H1 (cell line): ENCODE measurements at regions of chr10 and their contacts with region 1.

Region 1: GRCh38 chr10:117174439-117175214 is 22.7 kb upstream of the KCNK18 start:
- DNase-seq: peak; percentile 67 to 96
- H3K4me3 ChIP-seq: peak overlapping the region; percentile 29 to 67 (median 60); a peak in 7 of 8 replicates
- H3K27ac ChIP-seq: no peak overlapping the region
- H3K4me1 ChIP-seq: peaks cover 0 to 15% (median 7%) of the 10 kb centered on the region in 4 experiments; a peak in 6 of 7 replicates
- H3K27me3 ChIP-seq: peaks cover 32 to 56% (median 49%) of the 10 kb centered on the region in 4 experiments
- CTCF ChIP-seq: peak; percentile 70 to 96 (median 96)
- EP300 ChIP-seq: no peak
- POLR2A ChIP-seq: no peak
- RAD21 ChIP-seq: peak; percentile 93 to 94

Region 2: DNA sequence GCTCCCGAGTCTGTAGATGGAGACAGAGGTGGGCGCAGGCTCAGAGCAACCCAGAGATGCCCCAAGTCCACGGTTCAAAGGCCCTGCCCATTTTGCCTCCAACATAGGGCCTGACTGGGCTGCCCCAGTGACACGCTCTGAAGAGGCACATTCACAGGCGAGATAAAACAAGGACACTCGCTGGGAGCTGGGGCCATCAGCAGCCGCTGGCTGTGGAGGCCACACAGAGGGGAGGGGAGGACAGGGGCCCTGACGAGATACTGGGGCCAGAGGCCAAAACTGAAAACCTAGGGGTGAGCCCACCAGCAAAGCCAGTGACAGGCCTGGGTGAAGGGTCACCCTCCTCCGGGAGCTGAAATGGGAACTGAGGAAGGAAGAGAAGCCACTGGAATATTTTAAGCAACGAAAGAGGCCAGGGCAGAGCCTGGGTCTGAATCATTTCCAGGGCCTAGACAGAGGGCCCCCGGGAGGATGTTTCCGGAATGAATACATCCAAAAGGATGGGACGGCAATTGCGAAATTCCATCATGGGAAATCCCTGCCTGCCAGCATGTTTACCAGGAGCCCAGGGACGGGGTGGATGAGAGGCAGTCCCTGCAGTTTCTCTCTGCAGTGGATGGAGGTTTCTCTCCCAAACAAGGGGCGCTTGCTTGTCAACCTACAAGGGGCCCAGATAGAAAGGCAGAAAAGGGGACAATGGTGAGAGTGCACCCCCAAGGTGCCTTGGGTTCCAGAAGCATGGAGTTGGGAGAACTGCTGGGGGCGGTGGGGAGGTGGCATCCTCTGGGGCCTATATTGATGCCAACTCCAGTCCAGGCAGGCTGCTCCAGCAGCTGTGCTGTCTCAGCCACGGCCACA is 403.3 kb before region 1 on chr10:
- CTCF ChIA-PET with region 1: interaction called, 12 read pairs
- POLR2A ChIA-PET with region 1: no interaction called
- DNase-seq: no peak
- H3K4me3 ChIP-seq: no peak overlapping the region
- H3K27ac ChIP-seq: no peak overlapping the region
- H3K4me1 ChIP-seq: peaks cover 0 to 7% (median 0%) of the 10 kb centered on the region in 4 experiments; a peak in 2 of 7 replicates
- H3K27me3 ChIP-seq: no peaks in the 10 kb centered on the region; a peak in 1 of 7 replicates
- CTCF ChIP-seq: no peak
- EP300 ChIP-seq: no peak
- POLR2A ChIP-seq: no peak
- RAD21 ChIP-seq: no peak

Region 3: GRCh38 chr10:117094856-117095255 is 79.8 kb before region 1 on chr10:
- CTCF ChIA-PET with region 1: interaction called, 10 read pairs
- POLR2A ChIA-PET with region 1: no interaction called
- DNase-seq: no peak
- H3K4me3 ChIP-seq: no peak overlapping the region
- H3K27ac ChIP-seq: no peak overlapping the region
- H3K4me1 ChIP-seq: peaks cover 0 to 7% (median 4%) of the 10 kb centered on the region in 4 experiments; a peak in 3 of 7 replicates
- H3K27me3 ChIP-seq: no peaks in the 10 kb centered on the region
- CTCF ChIP-seq: no peak
- EP300 ChIP-seq: no peak
- POLR2A ChIP-seq: no peak
- RAD21 ChIP-seq: no peak

Region 4: DNA sequence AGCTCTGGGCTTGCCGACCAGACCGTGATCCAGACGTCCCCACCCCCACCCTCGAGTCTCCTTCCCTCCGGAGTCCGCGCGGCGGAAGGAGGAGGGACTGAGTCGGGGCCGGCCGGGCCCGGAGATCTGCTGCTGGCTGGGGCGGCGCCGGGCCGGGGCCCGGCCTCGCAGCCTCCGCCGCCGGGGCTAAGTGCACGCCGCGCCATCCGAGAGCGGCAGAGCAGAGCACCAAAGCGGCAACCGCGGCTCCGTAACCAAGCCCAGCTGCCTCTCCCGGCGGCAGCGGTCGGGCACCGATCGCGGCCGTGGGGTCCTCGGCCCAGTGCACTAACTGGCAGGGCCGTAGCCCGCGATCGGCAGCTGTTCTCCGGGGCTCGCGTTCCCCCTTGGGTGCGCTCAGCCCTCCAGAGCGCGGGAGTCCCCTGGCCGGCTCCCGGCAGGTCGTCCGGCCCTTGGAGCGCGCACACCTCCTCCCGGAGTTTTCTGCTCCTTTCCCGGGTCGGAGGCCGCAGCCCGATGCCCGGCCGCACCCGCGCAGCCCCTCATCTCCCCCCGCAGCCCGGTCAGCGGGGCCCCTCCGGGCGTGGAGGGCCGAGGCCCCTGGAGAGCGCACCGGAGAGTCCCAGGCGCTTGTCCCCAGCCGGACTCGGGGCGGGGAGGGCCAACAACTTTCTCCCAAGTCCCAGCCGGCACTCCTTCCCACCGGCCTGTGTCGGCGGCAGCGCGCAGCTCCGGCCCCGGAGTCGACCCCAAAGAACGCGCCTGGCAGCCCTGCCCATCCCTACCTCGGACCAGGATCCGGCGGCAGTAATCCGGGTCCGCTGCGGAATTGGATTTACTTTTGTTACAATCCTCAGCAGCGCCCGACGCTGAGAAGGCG is 37.4 kb before region 1 on chr10:
- CTCF ChIA-PET with region 1: interaction called, 212 read pairs
- POLR2A ChIA-PET with region 1: no interaction called
- DNase-seq: peak in 1 of 2 experiments; percentile 74
- H3K4me3 ChIP-seq: peak overlapping the region; percentile 10 to 55 (median 30); a peak in 7 of 8 replicates
- H3K27ac ChIP-seq: no peak overlapping the region
- H3K4me1 ChIP-seq: peaks cover 3 to 32% (median 16%) of the 10 kb centered on the region in 4 experiments
- H3K27me3 ChIP-seq: peaks cover 96 to 99% (median 98%) of the 10 kb centered on the region in 4 experiments
- CTCF ChIP-seq: no peak
- EP300 ChIP-seq: no peak
- POLR2A ChIP-seq: no peak
- RAD21 ChIP-seq: no peak

Region 5: DNA sequence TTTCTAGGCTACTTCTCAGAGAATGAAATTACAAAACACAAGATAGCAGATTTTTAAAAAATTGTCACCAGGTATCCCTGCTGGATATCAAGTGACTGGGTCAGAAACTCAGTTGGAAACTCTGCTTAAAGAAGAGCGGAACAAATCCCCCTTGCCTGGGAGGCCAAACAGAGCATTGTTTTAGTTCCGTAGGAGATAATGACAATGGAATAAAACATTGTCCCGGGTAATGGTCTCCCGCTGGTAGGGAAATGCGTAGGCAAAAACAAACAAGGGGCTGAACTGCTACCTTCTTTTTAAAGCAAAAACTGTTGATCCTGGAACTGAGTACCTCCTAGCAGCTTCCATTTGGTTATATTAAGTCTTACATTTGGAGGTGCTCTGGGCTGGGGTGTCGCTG is 15.2 kb before region 1 on chr10:
- CTCF ChIA-PET with region 1: interaction called, 44 read pairs
- POLR2A ChIA-PET with region 1: no interaction called
- DNase-seq: peak; percentile 82 to 86
- H3K4me3 ChIP-seq: peak overlapping the region in 1 of 4 experiments; percentile 15; a peak in 1 of 8 replicates
- H3K27ac ChIP-seq: no peak overlapping the region
- H3K4me1 ChIP-seq: peaks cover 6 to 14% (median 10%) of the 10 kb centered on the region in 4 experiments; a peak in 6 of 7 replicates
- H3K27me3 ChIP-seq: peaks cover 78 to 97% (median 92%) of the 10 kb centered on the region in 4 experiments
- CTCF ChIP-seq: no peak
- EP300 ChIP-seq: peak in 1 of 2 experiments; percentile 88; a peak in 1 of 3 replicates
- POLR2A ChIP-seq: no peak
- RAD21 ChIP-seq: no peak

Region 6: DNA sequence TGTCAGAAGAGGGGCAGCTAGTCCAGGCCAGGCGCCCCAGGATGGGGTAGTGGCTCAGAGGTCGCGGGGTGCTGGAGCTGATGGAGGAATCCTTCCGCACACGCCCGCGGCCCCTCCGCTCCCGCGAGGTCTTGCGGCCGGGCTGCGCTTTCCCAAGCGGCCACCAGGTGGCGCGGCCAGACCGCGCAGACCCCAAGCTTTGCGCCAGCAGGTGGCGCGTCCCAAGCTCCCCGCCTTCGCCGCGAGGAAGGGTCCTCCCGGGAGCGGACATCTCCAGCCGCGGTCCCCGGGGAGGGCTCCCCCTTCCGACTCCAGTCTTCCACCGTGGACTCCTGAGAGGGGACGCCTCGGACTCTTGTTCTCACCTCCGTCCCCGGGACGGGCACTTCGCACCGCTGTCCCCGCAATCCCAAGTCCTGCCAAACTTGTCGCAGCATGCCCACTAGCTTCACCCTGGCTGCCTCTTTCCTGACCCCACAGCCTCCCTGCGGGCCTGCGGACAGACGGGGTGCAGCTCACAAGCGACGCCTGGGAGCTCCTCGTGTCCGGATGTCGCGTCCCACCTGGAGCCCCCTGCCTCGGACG is 42.1 kb after region 1 on chr10:
- CTCF ChIA-PET with region 1: interaction called, 13 read pairs
- POLR2A ChIA-PET with region 1: no interaction called
- DNase-seq: peak; percentile 59 to 93
- H3K4me3 ChIP-seq: peak overlapping the region; percentile 29 to 81 (median 70)
- H3K27ac ChIP-seq: no peak overlapping the region
- H3K4me1 ChIP-seq: peaks cover 0 to 7% (median 7%) of the 10 kb centered on the region in 4 experiments; a peak in 5 of 7 replicates
- H3K27me3 ChIP-seq: peaks cover 7 to 29% (median 25%) of the 10 kb centered on the region in 4 experiments
- CTCF ChIP-seq: peak; percentile 99 to 100 (median 99)
- EP300 ChIP-seq: peak in 1 of 2 experiments; percentile 38; a peak in 1 of 3 replicates
- POLR2A ChIP-seq: no peak
- RAD21 ChIP-seq: peak; percentile 94 to 96